ENCODE measurements at regions of chr2 and their contacts with region 1.

Region 1: GRCh38 chr2:11589316-11589940 is 55.6 kb downstream of the GREB1 start:
- DNase-seq: no peak
- H3K4me3 ChIP-seq: no peak overlapping the region
- H3K27ac ChIP-seq: no peak overlapping the region
- H3K4me1 ChIP-seq: no peaks in the 10 kb centered on the region
- H3K27me3 ChIP-seq: no peaks in the 10 kb centered on the region
- CTCF ChIP-seq: no peak

Region 2: GRCh38 chr2:9793156-9793917 is 1796.1 kb before region 1 on chr2:
- intact Hi-C with region 1: no loop called
- DNase-seq: peak; percentile 9
- H3K4me3 ChIP-seq: no peak overlapping the region
- H3K27ac ChIP-seq: peak overlapping the region; percentile 66
- H3K4me1 ChIP-seq: peaks cover 19% of the 10 kb centered on the region
- H3K27me3 ChIP-seq: no peaks in the 10 kb centered on the region
- CTCF ChIP-seq: no peak

Region 3: DNA sequence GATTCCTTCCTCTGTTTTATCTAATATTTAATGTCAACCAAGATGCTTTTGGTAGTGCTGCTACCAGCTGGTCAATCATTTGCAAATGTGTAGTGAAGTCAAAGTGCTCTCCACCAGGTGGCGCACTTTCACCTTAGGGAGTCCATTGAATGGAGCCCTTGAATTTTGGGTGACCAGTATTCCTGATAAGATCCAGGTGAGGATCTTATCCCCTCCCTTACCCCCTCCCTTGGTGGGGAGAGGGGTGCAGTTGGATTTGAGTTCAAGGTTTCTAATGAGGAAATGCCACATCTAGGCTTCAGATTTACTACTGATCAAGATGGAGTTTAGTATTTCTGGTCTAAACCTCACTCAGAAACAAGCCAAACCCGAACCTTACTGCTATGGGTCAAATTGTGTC is 111.4 kb before region 1 on chr2:
- intact Hi-C with region 1: loop called (anchors 5 kb)
- DNase-seq: peak; percentile 83
- H3K4me3 ChIP-seq: no peak overlapping the region
- H3K27ac ChIP-seq: no peak overlapping the region
- H3K4me1 ChIP-seq: peaks cover 9% of the 10 kb centered on the region
- H3K27me3 ChIP-seq: peaks cover 21% of the 10 kb centered on the region
- CTCF ChIP-seq: peak; percentile 90

Region 4: GRCh38 chr2:12057436-12058166 is 468.2 kb after region 1 on chr2:
- intact Hi-C with region 1: no loop called
- DNase-seq: peak; percentile 22
- H3K4me3 ChIP-seq: no peak overlapping the region
- H3K27ac ChIP-seq: no peak overlapping the region
- H3K4me1 ChIP-seq: no peaks in the 10 kb centered on the region
- H3K27me3 ChIP-seq: no peaks in the 10 kb centered on the region
- CTCF ChIP-seq: no peak